Gastrocnemius medialis (tissue), 4 donors: ENCODE measurements at regions of chr17 and their contacts with region 1.

Region 1: GRCh38 chr17:7745748-7746470 is 28.4 kb downstream of the DNAH2 start:
- DNase-seq: no peak
- ATAC-seq: peak in 1 of 2 donors; percentile 36
- H3K4me3 ChIP-seq: no peak overlapping the region
- H3K27ac ChIP-seq: no peak overlapping the region
- H3K4me1 ChIP-seq: no peaks in the 10 kb centered on the region
- H3K27me3 ChIP-seq: peaks cover 0 to 7% (median 0%) of the 10 kb centered on the region in 3 donors
- CTCF ChIP-seq: no peak
- POLR2A ChIP-seq: no peak

Region 2: DNA sequence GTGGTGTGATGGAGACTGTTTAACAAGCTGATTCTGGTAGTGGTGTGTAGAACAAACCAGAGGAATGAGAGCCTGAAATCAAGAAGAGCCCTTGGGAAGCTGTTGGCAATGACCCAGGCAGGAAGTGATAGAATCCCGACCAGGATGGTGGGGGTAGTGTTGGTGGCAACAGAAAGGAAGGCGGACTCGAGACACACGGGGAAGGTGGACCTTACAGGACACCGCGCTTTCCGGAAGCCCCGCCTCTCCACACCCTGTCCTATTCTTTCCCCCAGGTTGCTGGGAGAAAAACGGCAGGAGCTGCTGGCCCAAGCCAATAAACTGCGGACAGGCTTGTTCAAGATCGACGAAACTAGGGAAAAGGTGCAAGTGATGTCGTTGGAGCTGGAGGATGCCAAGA is 58.1 kb after region 1 on chr17:
- in situ Hi-C with region 1: no loop called
- intact Hi-C with region 1: no loop called
- DNase-seq: no peak
- ATAC-seq: no peak
- H3K4me3 ChIP-seq: no peak overlapping the region
- H3K27ac ChIP-seq: no peak overlapping the region
- H3K4me1 ChIP-seq: no peaks in the 10 kb centered on the region
- H3K27me3 ChIP-seq: no peaks in the 10 kb centered on the region
- CTCF ChIP-seq: no peak
- POLR2A ChIP-seq: no peak

Region 3: DNA sequence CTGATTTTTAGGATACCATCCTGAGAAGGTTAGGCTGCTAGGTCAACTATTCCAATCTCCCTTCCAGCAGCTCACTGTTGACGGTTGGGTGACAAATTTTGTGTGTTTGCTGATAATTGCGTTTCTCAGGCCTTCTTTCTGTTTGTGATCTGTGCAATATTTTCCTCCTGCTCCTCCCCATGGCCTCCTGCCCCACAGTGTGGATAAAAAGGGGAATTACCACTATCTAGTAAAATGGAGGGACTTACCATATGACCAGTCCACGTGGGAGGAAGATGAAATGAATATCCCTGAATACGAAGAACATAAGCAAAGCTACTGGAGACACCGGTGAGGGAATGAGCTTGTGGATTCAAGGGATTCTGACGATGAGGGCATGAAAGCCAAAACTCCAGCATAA is 151.9 kb after region 1 on chr17:
- in situ Hi-C with region 1: loop called in 1 of 4 experiments (anchors 25 kb)
- intact Hi-C with region 1: loop called (anchors 10 kb)
- DNase-seq: no peak
- ATAC-seq: peak; percentile 59 to 68
- H3K4me3 ChIP-seq: no peak overlapping the region
- H3K27ac ChIP-seq: no peak overlapping the region
- H3K4me1 ChIP-seq: peaks cover 0 to 5% of the 10 kb centered on the region in 2 donors
- H3K27me3 ChIP-seq: no peaks in the 10 kb centered on the region
- CTCF ChIP-seq: peak; percentile 28 to 51 (median 43)
- POLR2A ChIP-seq: no peak